ENCODE measurements at regions of chr1 and their contacts with region 1.

Region 1: DNA sequence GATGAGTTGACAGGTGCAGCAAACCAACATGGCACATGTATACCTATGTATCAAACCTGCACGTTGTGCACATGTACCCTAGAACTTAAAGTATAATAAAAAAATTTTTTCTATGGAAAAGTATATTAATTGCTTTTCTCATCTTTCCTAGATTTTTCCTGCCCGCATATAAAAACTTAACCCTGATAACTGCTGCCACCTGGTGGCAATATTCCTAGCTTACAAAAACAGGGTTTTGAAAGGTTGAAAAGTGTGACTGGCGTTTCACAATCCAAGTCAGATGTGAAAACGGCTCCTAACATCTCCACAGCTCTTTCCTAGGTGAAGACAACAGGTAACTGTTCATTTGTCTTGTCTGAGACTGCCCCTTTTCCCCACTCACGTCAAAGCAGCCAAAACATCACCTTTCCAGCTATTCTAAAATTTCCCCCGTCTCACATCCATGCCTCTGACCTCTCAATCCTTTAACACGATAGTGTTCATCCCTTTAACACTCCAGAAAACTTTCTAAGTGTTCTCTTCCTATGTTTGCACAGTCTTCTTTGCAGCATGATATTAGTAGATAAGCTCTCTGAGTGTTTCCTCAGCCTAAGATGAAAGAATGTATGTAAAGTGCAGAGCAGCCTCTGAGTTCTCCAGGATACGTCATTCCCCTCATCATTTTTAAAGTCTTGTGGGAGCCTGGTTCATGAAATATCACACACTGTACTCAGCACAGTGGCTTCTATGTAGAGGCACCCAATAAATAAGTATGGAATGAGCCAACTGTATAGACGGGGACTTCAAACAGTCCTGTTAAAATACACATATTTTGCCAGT is 27.5 kb downstream of the OVGP1 start:
- DNase-seq: peak in 2 of 4 donors; percentile 41 to 63
- ATAC-seq: peak; percentile 85
- H3K4me3 ChIP-seq: no peak overlapping the region
- H3K27ac ChIP-seq: no peak overlapping the region
- H3K4me1 ChIP-seq: no peaks in the 10 kb centered on the region
- H3K27me3 ChIP-seq: no peaks in the 10 kb centered on the region
- CTCF ChIP-seq: peak; percentile 64 to 71

Region 2: DNA sequence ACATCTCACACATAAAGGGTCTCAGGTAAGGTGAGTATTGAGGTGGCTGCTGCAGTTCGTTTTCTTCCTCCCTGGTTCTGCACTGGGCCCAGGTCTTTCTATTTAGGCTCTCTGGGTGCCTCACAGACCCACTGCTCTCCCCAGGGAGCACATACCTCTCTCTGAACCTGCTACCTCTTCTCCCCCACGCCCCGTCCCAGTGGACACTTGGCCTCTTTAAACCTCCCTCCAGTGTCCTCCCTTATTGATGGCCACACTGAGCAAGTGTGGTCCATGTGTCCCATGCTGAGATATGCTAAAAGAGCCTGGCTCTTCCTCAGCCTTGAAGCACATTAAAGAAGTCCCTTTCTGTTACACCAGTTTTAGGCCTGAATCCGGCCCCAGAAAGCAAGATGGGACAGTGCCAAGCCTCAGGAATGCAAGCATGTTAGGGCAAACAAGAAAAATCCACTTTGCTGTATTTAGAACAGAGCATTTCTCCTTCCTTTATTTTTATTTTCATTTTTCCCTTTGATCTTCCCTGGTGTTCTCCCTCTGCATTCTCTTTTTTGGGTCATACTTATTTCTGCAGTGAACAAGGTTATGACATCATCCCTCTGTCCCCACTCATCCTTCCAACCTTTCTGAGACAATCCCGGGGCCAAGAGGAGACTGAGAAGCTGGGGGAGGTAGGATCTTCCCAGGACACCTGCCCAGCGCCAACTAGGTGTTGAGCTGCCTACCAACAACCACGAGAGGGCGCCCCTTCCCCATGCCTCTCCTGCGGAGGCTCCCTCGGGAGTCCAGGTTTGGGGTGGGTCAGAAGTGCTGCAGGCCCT is 177.5 kb before region 1 on chr1:
- intact Hi-C with region 1: loop called in 1 of 2 experiments (anchors 10 kb)
- DNase-seq: peak in 3 of 4 donors; percentile 49 to 95 (median 81)
- ATAC-seq: peak; percentile 96
- H3K4me3 ChIP-seq: no peak overlapping the region
- H3K27ac ChIP-seq: peak overlapping the region in 1 of 2 donors; percentile 74
- H3K4me1 ChIP-seq: peaks cover 7 to 62% of the 10 kb centered on the region in 2 donors
- H3K27me3 ChIP-seq: no peaks in the 10 kb centered on the region
- CTCF ChIP-seq: peak; percentile 87 to 94

Region 3: GRCh38 chr1:111648806-111649205 is 248.8 kb after region 1 on chr1:
- intact Hi-C with region 1: no loop called
- DNase-seq: no peak
- ATAC-seq: no peak
- H3K4me3 ChIP-seq: no peak overlapping the region
- H3K27ac ChIP-seq: peak overlapping the region in 1 of 2 donors; percentile 4
- H3K4me1 ChIP-seq: peaks cover 0 to 37% of the 10 kb centered on the region in 2 donors
- H3K27me3 ChIP-seq: no peaks in the 10 kb centered on the region
- CTCF ChIP-seq: no peak